CD4-positive, alpha-beta T cell (primary cell): ENCODE measurements at regions of chr7 and their contacts with region 1.

Region 1: DNA sequence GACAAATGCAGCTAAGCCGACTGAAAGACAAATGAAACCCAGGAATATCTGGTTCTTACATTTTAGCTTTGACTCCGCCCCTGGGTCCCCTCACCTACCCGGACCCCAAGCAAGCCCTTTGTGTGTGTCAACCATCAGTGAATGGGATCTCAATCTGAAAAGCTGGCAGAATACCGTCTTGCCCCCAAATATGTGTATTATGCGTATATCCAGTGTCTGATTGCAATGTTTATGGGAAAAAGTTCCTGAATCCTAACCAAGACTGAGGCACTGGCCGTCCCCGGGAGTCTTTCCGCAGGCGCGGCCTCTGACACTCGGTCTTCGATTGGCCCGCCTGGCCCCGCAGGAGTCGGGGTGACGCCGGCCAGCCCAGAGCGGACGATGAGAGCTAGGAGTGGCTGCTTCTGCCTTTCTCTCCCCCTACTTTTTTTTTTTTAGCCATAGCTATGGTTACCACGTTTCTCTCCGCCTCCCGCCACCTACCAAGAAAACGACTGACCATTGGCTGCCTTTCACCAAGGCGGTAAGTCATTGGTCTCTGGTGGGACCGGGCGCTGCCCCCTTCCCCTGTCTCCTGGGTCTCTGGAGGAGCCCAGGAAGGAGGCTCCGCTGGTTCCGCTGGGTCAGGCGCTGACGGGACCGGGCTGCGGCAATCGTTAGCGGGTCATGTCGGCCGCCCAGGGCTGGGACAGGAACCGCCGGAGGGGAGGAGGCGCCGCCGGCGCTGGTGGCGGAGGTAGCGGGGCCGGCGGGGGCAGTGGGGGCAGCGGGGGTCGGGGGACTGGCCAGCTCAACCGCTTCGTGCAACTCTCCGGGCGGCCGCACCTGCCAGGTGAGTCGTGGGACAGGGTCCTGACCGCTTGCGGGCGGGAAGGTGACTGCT is at the start of gene KLHDC10:
- DNase-seq: peak; percentile 90 to 99 (median 94)
- ATAC-seq: peak; percentile 94
- H3K4me3 ChIP-seq: peak within 1 kb of the TSS; percentile 82
- H3K4me3 Mint-ChIP-seq: peak within 1 kb of the TSS; percentile 96
- H3K27ac ChIP-seq: peak within 1 kb of the TSS; percentile 62 to 81
- H3K27ac Mint-ChIP-seq: peak within 1 kb of the TSS; percentile 86
- H3K4me1 ChIP-seq: peaks cover 22% of the 10 kb centered on the region
- H3K4me1 Mint-ChIP-seq: peaks cover 48% of the 10 kb centered on the region
- H3K27me3 ChIP-seq: no peaks in the 10 kb centered on the region
- H3K27me3 Mint-ChIP-seq: no peaks in the 10 kb centered on the region
- CTCF ChIP-seq: no peak
- total RNA-seq, gene KLHDC10: 7.0 to 8.8 TPM

Region 2: DNA sequence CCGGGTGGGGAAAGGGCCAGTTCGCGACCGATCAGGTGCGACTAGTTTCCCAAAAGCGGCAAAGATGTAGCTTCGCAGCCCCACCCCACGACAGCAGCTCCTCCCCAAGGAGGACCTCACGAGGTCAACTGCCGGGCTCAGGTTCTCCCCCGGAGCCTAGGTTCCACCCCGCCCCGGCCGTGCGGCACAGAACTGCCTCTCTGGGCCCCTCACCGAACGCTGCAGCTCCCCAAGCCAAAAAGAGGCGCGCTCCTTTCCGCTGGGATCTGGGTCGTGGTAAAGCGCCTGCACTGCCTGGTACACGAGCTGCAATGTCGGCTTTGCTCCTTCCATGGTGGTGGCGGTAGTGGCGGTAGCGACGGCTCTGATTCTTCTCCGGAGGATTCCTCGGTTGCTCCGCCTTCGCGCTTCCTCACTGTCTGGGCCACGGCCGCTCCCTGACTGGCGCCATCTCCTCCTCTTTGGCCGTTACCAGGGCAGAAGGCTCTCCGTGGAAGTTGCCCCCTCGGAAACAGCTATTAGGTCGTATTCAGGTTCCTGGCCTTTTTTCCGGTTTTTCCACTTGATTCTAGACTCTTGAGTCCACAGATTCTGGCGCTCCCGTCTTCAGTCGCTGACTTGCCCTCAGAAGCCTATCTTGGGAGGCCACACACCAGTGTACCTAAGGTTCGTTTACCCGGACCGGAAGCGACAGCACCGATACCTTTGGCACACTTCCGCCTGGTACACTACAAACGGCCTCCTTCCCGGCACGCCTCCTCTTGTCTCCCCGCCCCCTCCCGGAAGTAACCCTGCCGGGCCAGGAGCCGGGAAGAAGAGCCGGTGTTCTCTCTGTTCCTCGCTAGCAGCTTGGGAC is 1015.6 kb before region 1 on chr7 and contains the start of gene TNPO3:
- CTCF ChIA-PET with region 1: no interaction called
- POLR2A ChIA-PET with region 1: no interaction called
- intact Hi-C with region 1: loop called in 1 of 2 experiments (anchors 5 kb)
- DNase-seq: peak; percentile 80 to 94 (median 86)
- ATAC-seq: peak; percentile 87
- H3K4me3 ChIP-seq: peak within 1 kb of the TSS; percentile 88
- H3K4me3 Mint-ChIP-seq: peak within 1 kb of the TSS; percentile 99
- H3K27ac ChIP-seq: peak within 1 kb of the TSS; percentile 91 to 98
- H3K27ac Mint-ChIP-seq: peak within 1 kb of the TSS; percentile 96
- H3K4me1 ChIP-seq: peaks cover 25% of the 10 kb centered on the region
- H3K4me1 Mint-ChIP-seq: peaks cover 49% of the 10 kb centered on the region
- H3K27me3 ChIP-seq: peaks cover 0 to 4% of the 10 kb centered on the region in 2 experiments
- H3K27me3 Mint-ChIP-seq: no peaks in the 10 kb centered on the region
- CTCF ChIP-seq: no peak
- total RNA-seq, gene TNPO3: 17.1 to 18.7 TPM

Region 3: GRCh38 chr7:129952653-129953560 is 117.3 kb before region 1 on chr7 and contains the start of gene UBE2H:
- CTCF ChIA-PET with region 1: no interaction called
- POLR2A ChIA-PET with region 1: interaction called, 5 read pairs
- intact Hi-C with region 1: loop called in 1 of 2 experiments (anchors 5 kb)
- DNase-seq: peak; percentile 84 to 96 (median 91)
- ATAC-seq: peak; percentile 75
- H3K4me3 ChIP-seq: peak within 1 kb of the TSS; percentile 78
- H3K4me3 Mint-ChIP-seq: peak within 1 kb of the TSS; percentile 99
- H3K27ac ChIP-seq: peak within 1 kb of the TSS; percentile 82 to 89
- H3K27ac Mint-ChIP-seq: no peak within 1 kb of the TSS
- H3K4me1 ChIP-seq: peaks cover 35% of the 10 kb centered on the region
- H3K4me1 Mint-ChIP-seq: peaks cover 6% of the 10 kb centered on the region
- H3K27me3 ChIP-seq: no peaks in the 10 kb centered on the region
- H3K27me3 Mint-ChIP-seq: no peaks in the 10 kb centered on the region
- CTCF ChIP-seq: no peak
- total RNA-seq, gene UBE2H: 52.1 to 52.5 TPM

Region 4: DNA sequence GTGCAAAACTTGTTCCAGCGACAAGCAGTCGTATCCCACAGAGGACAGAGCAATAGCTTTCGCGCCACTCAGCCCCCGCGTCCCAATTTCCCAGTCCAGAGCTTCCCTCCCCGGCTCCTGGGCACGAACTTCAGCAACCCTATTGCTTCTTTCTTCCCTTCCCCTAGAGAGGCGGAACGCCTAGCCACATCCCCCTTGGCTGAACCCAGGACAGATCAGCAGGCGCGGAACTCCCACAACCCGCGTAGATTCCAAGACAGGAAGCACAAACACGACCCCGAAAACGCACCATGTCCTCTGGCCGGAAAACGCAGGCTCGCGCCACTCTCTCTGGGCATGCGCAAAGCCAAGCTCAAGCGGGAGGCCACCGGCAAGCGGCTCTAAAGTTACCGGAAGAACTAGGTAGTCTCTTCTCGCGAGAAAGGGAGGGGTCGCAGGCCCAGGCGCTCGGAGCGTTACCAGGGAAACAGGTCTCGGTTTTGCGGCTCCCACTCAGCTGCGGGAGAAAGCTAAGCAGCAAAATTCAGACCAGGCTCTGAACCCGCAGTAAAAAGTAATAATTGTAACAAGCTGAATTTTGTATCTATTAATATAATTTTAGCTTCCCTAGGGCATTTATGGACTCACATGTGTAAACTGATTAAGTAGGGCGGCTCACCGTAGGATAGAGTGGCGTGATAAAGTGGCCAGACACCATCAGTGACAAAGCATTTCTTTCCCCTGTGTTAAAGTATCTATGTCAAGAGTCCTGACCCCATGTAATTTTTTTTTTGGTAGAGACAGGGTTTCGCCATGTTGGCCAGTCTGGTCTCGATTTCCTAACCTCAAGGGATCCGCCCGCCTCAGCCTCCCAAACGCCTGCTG is 135.1 kb after region 1 on chr7 and contains the start of gene TMEM209:
- CTCF ChIA-PET with region 1: interaction called, 3 read pairs
- POLR2A ChIA-PET with region 1: interaction called, 13 read pairs
- intact Hi-C with region 1: loop called (anchors 1 to 2 kb)
- DNase-seq: peak; percentile 85 to 98 (median 91)
- ATAC-seq: peak; percentile 96
- H3K4me3 ChIP-seq: peak within 1 kb of the TSS; percentile 88
- H3K4me3 Mint-ChIP-seq: peak within 1 kb of the TSS; percentile 96
- H3K27ac ChIP-seq: peak within 1 kb of the TSS; percentile 81 to 87
- H3K27ac Mint-ChIP-seq: peak within 1 kb of the TSS; percentile 89
- H3K4me1 ChIP-seq: peaks cover 20% of the 10 kb centered on the region
- H3K4me1 Mint-ChIP-seq: peaks cover 40% of the 10 kb centered on the region
- H3K27me3 ChIP-seq: no peaks in the 10 kb centered on the region
- H3K27me3 Mint-ChIP-seq: no peaks in the 10 kb centered on the region
- CTCF ChIP-seq: no peak
- total RNA-seq, gene TMEM209: 18.3 to 18.8 TPM

Region 5: DNA sequence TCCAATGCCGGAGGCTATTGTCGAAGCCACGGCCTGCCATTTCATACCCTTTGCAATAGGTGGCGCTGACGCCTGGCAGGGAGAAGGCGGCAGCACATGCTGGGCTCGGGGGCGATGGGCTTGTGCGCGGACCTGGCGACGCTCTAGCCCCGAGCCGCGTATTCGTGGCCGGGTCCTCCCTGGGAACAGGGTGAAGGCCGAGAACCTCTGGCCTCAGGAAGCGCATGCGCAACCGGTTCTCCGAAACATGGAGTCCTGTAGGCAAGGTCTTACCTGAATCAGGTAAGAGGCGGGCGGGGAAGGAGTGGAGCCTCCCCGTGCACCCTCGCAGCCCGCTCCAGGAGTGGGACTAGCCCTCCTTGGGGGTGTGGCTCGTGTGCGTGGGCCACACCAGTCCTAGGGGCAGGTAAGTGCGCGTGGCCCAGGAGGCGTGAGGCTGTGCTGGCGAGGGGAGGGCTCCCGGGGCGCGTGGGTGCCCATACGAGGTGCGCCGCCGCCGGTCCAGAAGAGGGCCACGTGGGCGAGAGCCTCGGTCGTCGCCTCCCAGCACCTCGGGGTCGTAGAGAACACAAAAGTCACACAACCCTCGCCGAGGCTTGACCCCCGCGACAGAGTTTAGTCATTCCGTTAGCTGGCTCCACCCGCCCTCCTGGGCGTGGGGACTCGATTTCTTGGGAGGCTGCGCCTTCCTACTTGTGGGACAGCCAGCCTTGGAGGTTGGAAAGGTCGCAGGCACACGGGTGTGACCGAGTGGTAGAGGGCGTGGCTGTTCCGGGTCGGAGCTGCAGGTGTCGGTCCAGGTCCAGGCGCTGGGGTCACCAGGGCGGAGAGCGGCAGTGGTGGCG is 416.1 kb after region 1 on chr7:
- CTCF ChIA-PET with region 1: no interaction called
- POLR2A ChIA-PET with region 1: no interaction called
- intact Hi-C with region 1: loop called in 1 of 2 experiments (anchors 5 kb)
- DNase-seq: peak; percentile 26 to 82 (median 44)
- ATAC-seq: peak; percentile 86
- H3K4me3 ChIP-seq: peak overlapping the region; percentile 72
- H3K4me3 Mint-ChIP-seq: peak overlapping the region; percentile 89
- H3K27ac ChIP-seq: no peak overlapping the region
- H3K27ac Mint-ChIP-seq: no peak overlapping the region
- H3K4me1 ChIP-seq: peaks cover 23% of the 10 kb centered on the region
- H3K4me1 Mint-ChIP-seq: peaks cover 21% of the 10 kb centered on the region
- H3K27me3 ChIP-seq: peaks cover 21 to 23% of the 10 kb centered on the region in 2 experiments
- H3K27me3 Mint-ChIP-seq: peaks cover 67% of the 10 kb centered on the region
- CTCF ChIP-seq: peak; percentile 81

Region 6: GRCh38 chr7:130758429-130759056 is 688.3 kb after region 1 on chr7:
- CTCF ChIA-PET with region 1: interaction called, 3 read pairs
- POLR2A ChIA-PET with region 1: interaction called, 4 read pairs
- intact Hi-C with region 1: loop called (anchors 1 to 2 kb)
- DNase-seq: peak in 3 of 14 experiments; percentile 49 to 71 (median 67)
- ATAC-seq: peak; percentile 48
- H3K4me3 ChIP-seq: no peak overlapping the region
- H3K4me3 Mint-ChIP-seq: no peak overlapping the region
- H3K27ac ChIP-seq: no peak overlapping the region
- H3K27ac Mint-ChIP-seq: no peak overlapping the region
- H3K4me1 ChIP-seq: no peaks in the 10 kb centered on the region
- H3K4me1 Mint-ChIP-seq: no peaks in the 10 kb centered on the region
- H3K27me3 ChIP-seq: no peaks in the 10 kb centered on the region
- H3K27me3 Mint-ChIP-seq: peaks cover 7% of the 10 kb centered on the region
- CTCF ChIP-seq: peak; percentile 92

Region 7: DNA sequence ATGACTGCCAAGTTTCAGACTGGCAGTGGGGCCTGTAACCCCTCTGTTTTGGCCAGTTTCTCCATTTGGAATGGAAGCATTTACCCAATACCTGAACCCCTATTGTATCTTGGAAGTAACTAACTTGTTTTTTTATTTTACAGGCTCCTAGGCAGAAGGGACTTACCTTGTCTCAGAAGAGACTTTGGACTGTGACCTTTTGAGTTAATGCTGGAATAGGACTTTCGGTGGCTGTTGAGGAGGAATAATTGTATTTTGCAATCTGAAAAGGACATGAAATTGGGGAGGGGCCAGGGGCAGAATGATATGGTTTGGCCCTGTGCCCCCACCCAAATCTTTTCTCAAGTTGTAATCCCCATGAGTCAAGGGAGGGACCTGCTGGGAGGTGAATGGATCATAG is 1237.4 kb after region 1 on chr7:
- CTCF ChIA-PET with region 1: no interaction called
- POLR2A ChIA-PET with region 1: no interaction called
- intact Hi-C with region 1: no loop called
- DNase-seq: no peak
- ATAC-seq: no peak
- H3K4me3 ChIP-seq: no peak overlapping the region
- H3K4me3 Mint-ChIP-seq: no peak overlapping the region
- H3K27ac ChIP-seq: no peak overlapping the region
- H3K27ac Mint-ChIP-seq: no peak overlapping the region
- H3K4me1 ChIP-seq: no peaks in the 10 kb centered on the region
- H3K4me1 Mint-ChIP-seq: no peaks in the 10 kb centered on the region
- H3K27me3 ChIP-seq: no peaks in the 10 kb centered on the region
- H3K27me3 Mint-ChIP-seq: no peaks in the 10 kb centered on the region
- CTCF ChIP-seq: no peak